Activated CD4-positive, alpha-beta T cell treated with anti-CD3 and anti-CD28 coated beads for 36 hours (primary cell): ENCODE measurements at regions of chr18 and their contacts with region 1.

Region 1: DNA sequence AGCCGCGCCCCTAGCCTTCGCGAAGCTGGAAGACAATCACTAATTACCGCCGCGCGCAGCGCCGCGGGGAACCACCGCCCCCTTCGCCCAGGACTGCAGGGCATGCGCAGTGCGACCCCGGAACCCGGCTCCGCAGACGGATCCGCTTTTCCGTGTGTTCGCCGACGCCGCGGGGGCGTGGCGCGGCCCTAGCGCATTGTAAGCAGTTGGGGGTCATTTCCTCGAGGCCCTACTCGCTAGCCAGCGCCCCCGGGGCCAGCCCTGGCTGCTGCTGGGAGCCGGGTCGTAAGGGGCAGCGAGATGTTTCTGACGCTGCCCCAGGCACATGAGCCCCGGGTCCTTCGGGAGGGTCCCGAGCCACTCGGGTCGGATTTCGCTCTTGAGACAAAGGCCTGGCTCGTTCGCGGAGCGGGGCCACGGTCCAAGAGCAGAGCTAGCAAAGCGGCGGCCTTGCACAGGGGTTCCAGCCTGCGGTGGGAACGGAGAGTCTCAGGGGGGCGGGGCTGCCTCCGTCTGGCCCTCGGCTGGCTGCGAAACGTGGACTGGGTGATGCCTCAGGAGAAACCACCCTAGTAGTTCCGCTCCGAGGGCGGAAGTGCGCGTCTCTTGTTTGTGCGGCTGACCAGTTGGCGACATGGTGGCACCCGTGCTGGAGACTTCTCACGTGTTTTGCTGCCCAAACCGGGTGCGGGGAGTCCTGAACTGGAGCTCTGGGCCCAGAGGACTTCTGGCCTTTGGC is at the starts of genes ELP2 and SLC39A6:
- DNase-seq: peak; percentile 97
- ATAC-seq: peak; percentile 94
- H3K4me3 Mint-ChIP-seq: peak within 1 kb of the TSS; percentile 92
- H3K27ac Mint-ChIP-seq: peak within 1 kb of the TSS; percentile 95
- H3K4me1 Mint-ChIP-seq: peaks cover 57% of the 10 kb centered on the region
- H3K27me3 Mint-ChIP-seq: no peaks in the 10 kb centered on the region
- total RNA-seq, gene ELP2: 76.5 to 114 TPM
- total RNA-seq, gene SLC39A6: 23.9 to 28.6 TPM

Region 2: GRCh38 chr18:35290073-35290735 is 839.3 kb before region 1 on chr18 and contains the start of gene ZSCAN30:
- CTCF ChIA-PET with region 1: no interaction called
- POLR2A ChIA-PET with region 1: no interaction called
- intact Hi-C with region 1: loop called in 1 of 2 experiments (anchors 5 kb)
- DNase-seq: peak; percentile 97
- ATAC-seq: peak; percentile 97
- H3K4me3 Mint-ChIP-seq: peak within 1 kb of the TSS; percentile 96
- H3K27ac Mint-ChIP-seq: peak within 1 kb of the TSS; percentile 96
- H3K4me1 Mint-ChIP-seq: peaks cover 45% of the 10 kb centered on the region
- H3K27me3 Mint-ChIP-seq: no peaks in the 10 kb centered on the region
- total RNA-seq, gene ZSCAN30: 24.2 to 25.4 TPM

Region 3: GRCh38 chr18:35478520-35479435 is 650.7 kb before region 1 on chr18:
- CTCF ChIA-PET with region 1: no interaction called
- POLR2A ChIA-PET with region 1: no interaction called
- intact Hi-C with region 1: loop called in 1 of 2 experiments (anchors 5 kb)
- DNase-seq: peak; percentile 65
- ATAC-seq: peak; percentile 100
- H3K4me3 Mint-ChIP-seq: peak overlapping the region; percentile 22
- H3K27ac Mint-ChIP-seq: peak overlapping the region; percentile 55
- H3K4me1 Mint-ChIP-seq: peaks cover 40% of the 10 kb centered on the region
- H3K27me3 Mint-ChIP-seq: no peaks in the 10 kb centered on the region

Region 4: GRCh38 chr18:35580701-35581539 is 548.5 kb before region 1 on chr18:
- CTCF ChIA-PET with region 1: no interaction called
- POLR2A ChIA-PET with region 1: no interaction called
- intact Hi-C with region 1: loop called in 1 of 2 experiments (anchors 5 kb)
- DNase-seq: peak; percentile 72
- ATAC-seq: peak; percentile 61
- H3K4me3 Mint-ChIP-seq: peak overlapping the region; percentile 69
- H3K27ac Mint-ChIP-seq: peak overlapping the region; percentile 37
- H3K4me1 Mint-ChIP-seq: peaks cover 35% of the 10 kb centered on the region
- H3K27me3 Mint-ChIP-seq: peaks cover 17% of the 10 kb centered on the region

Region 5: DNA sequence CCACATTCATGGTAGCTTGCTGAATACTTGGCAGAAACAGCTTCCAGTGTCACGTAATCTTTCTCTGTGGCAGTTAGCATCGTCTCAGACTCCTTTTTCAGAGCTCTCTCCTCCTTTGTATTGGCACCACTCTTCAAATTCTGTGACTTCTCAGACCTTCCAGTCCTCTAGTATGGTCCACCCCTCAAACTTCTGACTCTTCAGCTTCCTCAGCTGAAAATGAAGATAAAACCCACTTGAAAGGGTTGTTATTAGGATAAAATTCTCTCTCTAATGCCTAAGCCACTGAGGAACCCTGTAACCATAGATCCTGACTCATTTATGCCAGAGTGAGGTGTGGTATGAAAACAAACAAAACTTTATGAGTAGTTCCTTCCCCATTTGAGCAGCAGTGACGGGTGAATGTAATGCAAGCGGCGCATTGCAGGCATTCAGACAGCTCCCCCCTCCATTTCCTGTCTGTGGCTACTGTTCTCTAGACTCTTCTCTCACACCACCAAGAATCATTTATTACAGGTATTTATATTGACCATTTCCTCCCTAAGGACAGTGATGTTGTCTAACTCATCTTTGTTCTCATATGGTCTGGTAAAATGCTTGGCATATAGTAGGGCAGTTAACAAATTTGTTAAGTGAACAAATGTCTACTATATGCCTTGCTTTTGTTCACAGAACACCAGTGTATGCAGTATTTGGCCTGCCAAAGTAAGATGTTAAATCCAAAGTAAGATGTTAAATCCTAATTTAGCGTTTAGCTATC is 512.6 kb before region 1 on chr18:
- CTCF ChIA-PET with region 1: no interaction called
- POLR2A ChIA-PET with region 1: no interaction called
- intact Hi-C with region 1: loop called in 1 of 2 experiments (anchors 2 kb)
- DNase-seq: peak; percentile 81
- ATAC-seq: peak; percentile 94
- H3K4me3 Mint-ChIP-seq: no peak overlapping the region
- H3K27ac Mint-ChIP-seq: no peak overlapping the region
- H3K4me1 Mint-ChIP-seq: peaks cover 16% of the 10 kb centered on the region
- H3K27me3 Mint-ChIP-seq: no peaks in the 10 kb centered on the region

Region 6: DNA sequence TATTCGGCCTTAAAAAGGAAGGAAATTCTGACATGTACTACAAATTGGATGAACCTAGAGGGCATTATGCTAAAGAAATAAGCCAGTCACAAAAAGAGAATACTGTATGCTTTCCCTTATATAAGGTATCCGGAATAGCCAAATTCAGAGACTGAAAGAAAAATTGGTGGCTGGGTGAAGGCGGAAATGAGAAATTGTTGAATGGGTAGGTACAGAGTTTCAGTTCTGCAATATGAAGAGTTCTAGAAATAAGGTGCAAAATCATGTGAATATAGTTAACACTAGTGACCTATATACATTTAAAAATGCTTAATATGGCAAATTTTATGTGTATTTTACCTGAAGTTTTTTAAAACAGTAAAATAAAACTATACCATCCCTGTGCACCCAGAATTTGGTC is 113.8 kb before region 1 on chr18:
- CTCF ChIA-PET with region 1: interaction called, 3 read pairs
- POLR2A ChIA-PET with region 1: no interaction called
- intact Hi-C with region 1: loop called in 1 of 2 experiments (anchors 10 kb)
- DNase-seq: no peak
- ATAC-seq: no peak
- H3K4me3 Mint-ChIP-seq: no peak overlapping the region
- H3K27ac Mint-ChIP-seq: no peak overlapping the region
- H3K4me1 Mint-ChIP-seq: no peaks in the 10 kb centered on the region
- H3K27me3 Mint-ChIP-seq: no peaks in the 10 kb centered on the region

Region 7: DNA sequence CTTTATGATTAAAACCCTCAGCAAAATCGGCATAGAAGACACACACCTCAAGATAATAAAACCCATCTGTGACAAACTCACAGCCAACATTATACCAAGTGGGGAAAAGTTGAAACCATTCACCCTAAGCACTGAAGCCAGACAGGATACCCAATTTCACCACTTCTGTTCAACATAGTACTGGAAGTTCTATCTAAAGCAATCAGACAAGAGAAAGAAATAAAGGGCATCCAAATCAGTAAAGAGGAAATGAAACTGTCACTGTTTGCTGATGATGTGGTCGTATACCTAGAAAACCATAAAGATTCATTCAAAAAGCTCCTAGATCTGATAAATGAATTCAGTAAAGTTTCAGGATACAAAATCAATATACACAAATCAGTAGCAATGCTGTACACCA is 45.7 kb before region 1 on chr18:
- CTCF ChIA-PET with region 1: no interaction called
- POLR2A ChIA-PET with region 1: no interaction called
- intact Hi-C with region 1: no loop called
- DNase-seq: no peak
- ATAC-seq: no peak
- H3K4me3 Mint-ChIP-seq: no peak overlapping the region
- H3K27ac Mint-ChIP-seq: no peak overlapping the region
- H3K4me1 Mint-ChIP-seq: peaks cover 5% of the 10 kb centered on the region
- H3K27me3 Mint-ChIP-seq: no peaks in the 10 kb centered on the region

Region 8: GRCh38 chr18:36828630-36829361 is 699.3 kb after region 1 on chr18 and contains the starts of genes KIAA1328 and TPGS2:
- CTCF ChIA-PET with region 1: no interaction called
- POLR2A ChIA-PET with region 1: interaction called, 4 read pairs
- intact Hi-C with region 1: loop called (anchors 1 kb)
- DNase-seq: peak; percentile 92
- ATAC-seq: peak; percentile 92
- H3K4me3 Mint-ChIP-seq: peak within 1 kb of the TSS; percentile 77
- H3K27ac Mint-ChIP-seq: peak within 1 kb of the TSS; percentile 95
- H3K4me1 Mint-ChIP-seq: peaks cover 35% of the 10 kb centered on the region
- H3K27me3 Mint-ChIP-seq: no peaks in the 10 kb centered on the region
- total RNA-seq, gene KIAA1328: 5.8 to 7.4 TPM
- total RNA-seq, gene TPGS2: 87.6 to 158 TPM

Region 9: DNA sequence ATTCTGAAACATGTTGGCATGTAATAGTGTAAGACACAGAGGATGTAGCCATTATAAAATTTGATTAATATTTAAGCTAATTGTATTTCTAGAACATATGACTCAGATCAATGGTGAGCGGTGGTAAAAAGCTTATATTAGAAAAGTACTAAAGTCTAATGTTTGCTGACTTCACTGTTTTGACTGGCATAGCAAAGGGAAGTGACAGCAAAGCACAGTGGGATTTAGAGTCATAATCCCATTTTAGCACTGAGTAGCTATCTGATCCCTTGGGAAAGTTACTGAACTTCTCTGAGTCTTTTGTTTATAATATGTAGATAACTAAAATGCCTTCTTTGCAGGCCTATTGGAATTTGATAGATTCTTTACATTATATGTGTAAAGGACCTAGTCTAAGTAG is 759.9 kb after region 1 on chr18:
- CTCF ChIA-PET with region 1: no interaction called
- POLR2A ChIA-PET with region 1: no interaction called
- intact Hi-C with region 1: no loop called
- DNase-seq: no peak
- ATAC-seq: no peak
- H3K4me3 Mint-ChIP-seq: no peak overlapping the region
- H3K27ac Mint-ChIP-seq: no peak overlapping the region
- H3K4me1 Mint-ChIP-seq: peaks cover 3% of the 10 kb centered on the region
- H3K27me3 Mint-ChIP-seq: no peaks in the 10 kb centered on the region